Activated naive CD4-positive, alpha-beta T cell treated with anti-CD3 and anti-CD28 coated beads for 36 hours (primary cell): ENCODE measurements at regions of chr6 and their contacts with region 1.

Region 1: GRCh38 chr6:129251669-129252376 is 368.9 kb downstream of the LAMA2 start:
- DNase-seq: peak; percentile 76
- H3K4me3 Mint-ChIP-seq: no peak overlapping the region
- H3K27ac Mint-ChIP-seq: no peak overlapping the region
- H3K4me1 Mint-ChIP-seq: peaks cover 23% of the 10 kb centered on the region
- H3K27me3 Mint-ChIP-seq: peaks cover 13% of the 10 kb centered on the region

Region 2: DNA sequence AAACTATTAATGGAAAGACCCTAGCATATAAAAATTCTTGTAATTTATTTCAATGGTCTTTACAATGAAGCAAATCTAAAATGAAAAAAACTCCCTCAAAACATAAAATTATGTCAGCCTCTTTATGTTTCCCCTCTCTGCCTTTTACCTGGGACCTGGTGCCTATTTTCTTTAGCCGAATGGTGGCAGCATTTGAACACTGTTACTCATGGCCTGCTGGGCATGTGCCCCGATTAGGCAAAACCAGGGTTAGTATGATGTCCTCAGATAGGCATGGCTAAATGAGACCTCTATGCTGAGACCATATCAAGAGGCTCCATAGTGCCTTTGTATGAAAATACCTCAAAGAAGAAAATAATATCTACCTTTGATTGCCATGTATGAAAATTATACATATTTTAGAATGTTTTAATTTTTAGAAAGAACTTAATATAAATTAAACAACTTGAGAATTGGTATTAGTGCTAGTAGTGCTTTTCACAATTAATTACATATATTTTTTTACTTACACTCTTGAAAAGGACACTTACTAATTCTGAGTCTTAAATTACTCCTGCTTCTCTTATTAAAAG is 1697.3 kb before region 1 on chr6:
- CTCF ChIA-PET with region 1: no interaction called
- intact Hi-C with region 1: loop called (anchors 1 kb)
- DNase-seq: peak; percentile 57
- H3K4me3 Mint-ChIP-seq: no peak overlapping the region
- H3K27ac Mint-ChIP-seq: no peak overlapping the region
- H3K4me1 Mint-ChIP-seq: no peaks in the 10 kb centered on the region
- H3K27me3 Mint-ChIP-seq: peaks cover 14% of the 10 kb centered on the region

Region 3: DNA sequence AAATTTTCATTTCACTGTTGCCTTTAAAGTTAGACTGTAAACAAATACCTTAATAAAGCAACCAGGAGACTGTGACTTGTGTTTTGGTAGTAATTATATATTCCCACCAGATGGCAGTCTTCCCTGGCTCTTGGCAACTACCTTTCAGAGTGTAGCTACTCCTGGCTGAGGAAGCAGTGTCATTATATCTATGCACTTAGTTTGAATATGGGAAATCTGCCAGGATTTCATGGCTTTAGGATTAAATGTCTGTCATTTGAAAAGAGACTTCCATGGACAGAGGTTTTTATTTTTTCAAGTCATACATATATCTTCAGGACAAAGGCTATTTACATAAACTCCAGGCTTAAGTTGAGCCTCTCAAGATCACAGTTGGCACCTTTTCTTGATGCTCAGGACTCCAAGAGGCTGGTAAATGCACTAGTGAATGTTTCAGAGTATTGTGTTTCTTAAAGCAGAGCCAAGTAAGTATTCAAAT is 1514.8 kb before region 1 on chr6:
- CTCF ChIA-PET with region 1: no interaction called
- intact Hi-C with region 1: loop called (anchors 1 kb)
- DNase-seq: peak; percentile 56
- H3K4me3 Mint-ChIP-seq: no peak overlapping the region
- H3K27ac Mint-ChIP-seq: peak overlapping the region; percentile 63
- H3K4me1 Mint-ChIP-seq: peaks cover 52% of the 10 kb centered on the region
- H3K27me3 Mint-ChIP-seq: no peaks in the 10 kb centered on the region

Region 4: GRCh38 chr6:128520436-128521281 is 731.2 kb before region 1 on chr6 and contains the start of gene PTPRK:
- CTCF ChIA-PET with region 1: no interaction called
- intact Hi-C with region 1: loop called (anchors 2 kb)
- DNase-seq: peak; percentile 92
- H3K4me3 Mint-ChIP-seq: peak within 1 kb of the TSS; percentile 91
- H3K27ac Mint-ChIP-seq: peak within 1 kb of the TSS; percentile 63
- H3K4me1 Mint-ChIP-seq: peaks cover 8% of the 10 kb centered on the region
- H3K27me3 Mint-ChIP-seq: peaks cover 34% of the 10 kb centered on the region
- total RNA-seq, gene PTPRK: 5.5 to 8.0 TPM

Region 5: DNA sequence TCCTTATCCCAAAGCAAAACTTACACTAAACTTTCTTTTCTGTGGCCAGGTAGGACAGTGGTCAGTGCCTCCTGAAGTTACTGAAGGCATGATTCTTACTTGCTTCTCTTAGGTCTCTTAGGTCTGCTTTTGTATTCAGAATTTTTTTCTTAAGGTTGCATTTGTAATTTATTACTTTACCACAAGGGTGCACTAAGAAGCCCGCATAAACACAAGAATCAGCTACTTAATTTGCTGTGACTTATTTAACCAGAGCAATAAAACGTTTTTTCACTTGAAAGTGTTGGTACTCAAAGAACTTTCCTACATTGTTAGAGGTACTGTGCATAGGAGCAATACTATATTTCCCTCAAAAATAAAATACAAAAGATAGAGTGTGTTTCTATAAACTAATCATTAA is 444.2 kb before region 1 on chr6:
- CTCF ChIA-PET with region 1: interaction called, 3 read pairs
- intact Hi-C with region 1: loop called (anchors 1 kb)
- DNase-seq: no peak
- H3K4me3 Mint-ChIP-seq: no peak overlapping the region
- H3K27ac Mint-ChIP-seq: no peak overlapping the region
- H3K4me1 Mint-ChIP-seq: no peaks in the 10 kb centered on the region
- H3K27me3 Mint-ChIP-seq: peaks cover 9% of the 10 kb centered on the region

Region 6: DNA sequence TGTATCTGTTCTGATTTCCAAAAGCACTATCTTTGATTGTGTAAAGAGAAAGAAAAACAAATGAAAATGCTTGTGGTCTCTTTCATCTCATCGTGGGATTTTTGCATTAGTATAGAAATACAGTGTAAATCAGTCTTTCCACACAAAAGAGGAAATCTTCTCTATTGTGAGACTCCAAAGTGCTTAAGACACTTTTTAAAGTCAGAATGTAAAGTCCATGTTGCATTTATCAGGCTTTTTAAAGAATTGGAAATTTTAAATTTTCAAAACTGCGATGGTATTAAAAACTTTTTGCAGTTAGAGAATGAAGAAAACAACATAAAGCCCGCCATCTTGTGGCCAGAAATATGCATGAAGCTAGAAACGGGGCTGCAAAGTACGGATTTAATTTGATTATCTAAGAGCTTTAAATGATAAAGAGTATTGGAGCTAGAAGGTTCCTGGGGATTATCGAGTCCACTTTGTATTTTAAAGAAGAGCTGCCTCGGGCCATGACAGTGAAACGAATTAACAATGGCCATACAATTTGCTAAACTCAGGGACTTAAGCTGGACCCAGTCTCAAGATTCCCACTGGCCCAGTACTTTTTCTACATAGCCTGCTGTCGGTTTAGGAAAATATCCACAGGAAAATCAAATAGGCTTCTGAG is 118.6 kb after region 1 on chr6:
- CTCF ChIA-PET with region 1: interaction called, 11 read pairs
- intact Hi-C with region 1: loop called (anchors 1 kb)
- DNase-seq: peak; percentile 77
- H3K4me3 Mint-ChIP-seq: no peak overlapping the region
- H3K27ac Mint-ChIP-seq: no peak overlapping the region
- H3K4me1 Mint-ChIP-seq: peaks cover 20% of the 10 kb centered on the region
- H3K27me3 Mint-ChIP-seq: no peaks in the 10 kb centered on the region

Region 7: GRCh38 chr6:129490521-129491245 is 238.9 kb after region 1 on chr6:
- CTCF ChIA-PET with region 1: no interaction called
- intact Hi-C with region 1: loop called (anchors 2 kb)
- DNase-seq: peak; percentile 79
- H3K4me3 Mint-ChIP-seq: peak overlapping the region; percentile 67
- H3K27ac Mint-ChIP-seq: peak overlapping the region; percentile 100
- H3K4me1 Mint-ChIP-seq: peaks cover 70% of the 10 kb centered on the region
- H3K27me3 Mint-ChIP-seq: no peaks in the 10 kb centered on the region